Ascending aorta (tissue), 2 donors: ENCODE measurements at regions of chr5 and their contacts with region 1.

Region 1: GRCh38 chr5:131263648-131264450 is at the start of gene CDC42SE2:
- DNase-seq: peak; percentile 49 to 91
- H3K4me3 ChIP-seq: peak within 1 kb of the TSS; percentile 92 to 97
- H3K27ac ChIP-seq: peak within 1 kb of the TSS; percentile 76 to 85
- H3K4me1 ChIP-seq: peaks cover 0 to 2% of the 10 kb centered on the region in 2 donors
- H3K27me3 ChIP-seq: no peaks in the 10 kb centered on the region
- CTCF ChIP-seq: no peak
- total RNA-seq, gene CDC42SE2: 12.8 TPM

Region 2: DNA sequence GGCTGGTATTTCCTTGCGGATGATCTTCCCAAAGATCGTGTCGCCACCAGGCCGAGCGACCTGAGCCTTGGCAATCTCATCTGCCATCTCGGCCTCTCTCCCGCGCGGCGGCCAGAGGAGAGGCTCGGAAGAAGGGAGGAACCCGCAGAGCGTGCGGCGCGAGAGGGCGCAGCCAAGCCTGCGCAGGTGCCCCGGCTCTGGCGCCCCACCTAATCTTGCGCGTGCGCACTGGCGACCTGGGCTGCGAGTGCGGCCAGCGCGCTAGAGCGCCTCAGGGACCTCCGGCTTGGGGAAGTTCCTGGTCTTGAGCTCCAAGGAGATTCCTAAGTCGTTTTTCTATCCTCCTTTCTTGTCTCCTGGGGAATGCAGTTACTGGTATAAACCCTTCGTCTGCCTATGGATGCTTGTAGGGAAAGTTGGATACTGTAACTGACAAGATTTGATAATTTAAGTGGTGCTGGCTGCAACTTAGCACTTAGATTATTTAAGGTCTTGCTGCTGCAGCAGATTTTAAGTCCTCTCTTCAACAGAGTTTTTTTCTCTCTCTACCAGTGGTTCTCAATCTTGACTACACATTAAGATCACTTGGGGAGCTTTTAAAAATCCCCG is 98.6 kb before region 1 on chr5 and contains the start of gene HINT1:
- intact Hi-C with region 1: loop called (anchors 1 kb)
- DNase-seq: peak; percentile 53 to 94
- H3K4me3 ChIP-seq: peak within 1 kb of the TSS; percentile 82 to 83
- H3K27ac ChIP-seq: peak within 1 kb of the TSS; percentile 92 to 94
- H3K4me1 ChIP-seq: peaks cover 3 to 13% of the 10 kb centered on the region in 2 donors
- H3K27me3 ChIP-seq: no peaks in the 10 kb centered on the region
- CTCF ChIP-seq: no peak
- total RNA-seq, gene HINT1: 78.9 TPM

Region 3: GRCh38 chr5:131170540-131171275 is 93.1 kb before region 1 on chr5 and contains the start of gene LYRM7:
- intact Hi-C with region 1: loop called (anchors 1 kb)
- DNase-seq: peak; percentile 95 to 99
- H3K4me3 ChIP-seq: peak within 1 kb of the TSS; percentile 81
- H3K27ac ChIP-seq: peak within 1 kb of the TSS; percentile 57 to 70
- H3K4me1 ChIP-seq: peaks cover 10 to 11% of the 10 kb centered on the region in 2 donors
- H3K27me3 ChIP-seq: no peaks in the 10 kb centered on the region
- CTCF ChIP-seq: no peak
- total RNA-seq, gene LYRM7: 0.32 TPM

Region 4: DNA sequence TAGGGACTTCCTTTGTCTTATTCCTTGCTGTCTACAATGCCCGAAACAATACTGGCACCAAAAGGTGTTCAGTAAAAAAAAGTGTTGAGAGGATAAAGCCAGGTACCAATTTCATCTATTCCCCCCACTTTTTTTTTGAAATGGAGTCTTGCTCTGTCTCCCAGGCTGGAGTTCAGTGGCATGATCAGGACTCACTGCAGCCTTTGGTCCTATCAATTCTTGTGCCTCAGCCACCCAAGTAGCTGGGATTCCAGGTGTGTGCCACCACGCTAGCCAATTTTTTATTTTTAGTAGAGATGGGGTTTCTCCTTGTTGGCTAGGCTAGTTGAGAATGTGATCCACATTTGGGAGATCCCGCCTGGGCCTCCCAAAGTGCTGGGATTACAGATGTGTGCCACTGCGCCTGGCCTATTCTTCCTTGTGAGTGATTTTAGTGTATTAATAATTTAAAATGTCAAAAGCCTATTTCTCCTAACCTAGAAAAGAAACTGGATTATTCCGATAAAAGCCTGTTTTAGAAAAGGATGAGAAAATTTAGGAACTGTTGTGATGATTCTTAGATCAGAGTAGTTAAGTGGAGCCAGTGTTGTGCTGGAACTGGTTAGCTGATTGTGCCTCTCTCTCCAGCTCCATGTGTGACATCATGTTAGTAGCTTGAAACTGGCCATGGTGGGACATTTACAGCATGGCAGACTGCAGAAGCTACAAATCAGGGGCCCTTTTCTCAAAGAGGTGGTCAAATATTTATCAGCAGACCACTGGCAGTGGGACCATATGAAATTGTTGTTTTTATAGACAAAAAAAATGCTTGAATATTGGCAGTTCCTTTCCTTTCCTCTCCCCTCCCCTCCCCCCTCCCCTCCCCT is 14.3 kb after region 1 on chr5:
- intact Hi-C with region 1: no loop called
- DNase-seq: no peak
- H3K4me3 ChIP-seq: no peak overlapping the region
- H3K27ac ChIP-seq: no peak overlapping the region
- H3K4me1 ChIP-seq: peaks cover 0 to 4% of the 10 kb centered on the region in 2 donors
- H3K27me3 ChIP-seq: no peaks in the 10 kb centered on the region
- CTCF ChIP-seq: no peak

Region 5: GRCh38 chr5:131296213-131296672 is 32.4 kb after region 1 on chr5:
- intact Hi-C with region 1: no loop called
- DNase-seq: no peak
- H3K4me3 ChIP-seq: no peak overlapping the region
- H3K27ac ChIP-seq: no peak overlapping the region
- H3K4me1 ChIP-seq: no peaks in the 10 kb centered on the region
- H3K27me3 ChIP-seq: no peaks in the 10 kb centered on the region
- CTCF ChIP-seq: no peak

Region 6: DNA sequence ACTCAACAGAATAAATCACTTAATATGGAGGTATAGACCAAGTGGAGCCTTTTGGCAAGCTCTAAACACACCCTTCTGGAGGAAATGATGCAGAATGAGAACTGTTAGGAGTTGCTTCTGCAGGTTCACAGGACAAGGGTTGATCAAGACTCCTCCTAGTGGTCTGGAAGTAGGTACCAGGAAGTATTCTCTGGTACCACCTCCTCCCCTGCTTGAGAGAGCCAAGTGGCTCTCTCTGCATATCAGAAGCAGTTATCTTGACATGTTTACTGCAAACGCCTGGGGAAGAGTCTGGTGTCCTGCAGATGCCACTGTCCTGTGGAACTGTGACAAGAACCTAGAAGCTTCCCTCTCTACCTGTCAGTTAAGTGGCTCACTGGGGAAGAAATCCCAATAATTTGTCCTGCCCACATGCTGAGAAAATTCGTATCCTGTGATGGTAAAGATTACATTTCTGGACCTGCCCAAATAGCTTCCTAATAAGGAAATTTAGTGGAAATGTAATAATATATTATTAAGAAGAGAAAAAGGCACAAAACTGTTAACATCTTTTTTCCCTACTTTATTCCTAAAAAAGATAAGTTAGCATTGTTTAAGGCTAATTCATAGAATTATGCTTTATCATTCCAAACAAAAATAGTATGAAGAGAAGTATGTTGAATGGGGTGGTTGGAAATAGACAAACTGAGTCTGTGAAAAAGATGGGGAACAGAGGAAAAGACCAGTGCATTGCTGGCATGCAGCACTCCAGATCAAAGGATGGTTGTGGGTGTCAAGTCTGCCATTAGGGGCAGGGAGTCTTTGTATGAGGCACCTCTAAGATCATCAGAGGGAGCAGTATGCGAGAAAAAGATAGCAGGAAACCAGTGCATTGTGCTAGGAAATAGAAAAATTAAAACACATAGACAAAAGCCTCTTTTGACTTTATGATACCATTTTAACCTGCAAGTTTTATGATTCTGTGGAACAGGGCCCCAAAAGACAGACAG is 118.9 kb after region 1 on chr5:
- intact Hi-C with region 1: loop called (anchors 10 kb)
- DNase-seq: no peak
- H3K4me3 ChIP-seq: no peak overlapping the region
- H3K27ac ChIP-seq: no peak overlapping the region
- H3K4me1 ChIP-seq: peaks cover 0 to 15% of the 10 kb centered on the region in 2 donors
- H3K27me3 ChIP-seq: no peaks in the 10 kb centered on the region
- CTCF ChIP-seq: peak in 2 of 3 experiments; percentile 8 to 17

Region 7: DNA sequence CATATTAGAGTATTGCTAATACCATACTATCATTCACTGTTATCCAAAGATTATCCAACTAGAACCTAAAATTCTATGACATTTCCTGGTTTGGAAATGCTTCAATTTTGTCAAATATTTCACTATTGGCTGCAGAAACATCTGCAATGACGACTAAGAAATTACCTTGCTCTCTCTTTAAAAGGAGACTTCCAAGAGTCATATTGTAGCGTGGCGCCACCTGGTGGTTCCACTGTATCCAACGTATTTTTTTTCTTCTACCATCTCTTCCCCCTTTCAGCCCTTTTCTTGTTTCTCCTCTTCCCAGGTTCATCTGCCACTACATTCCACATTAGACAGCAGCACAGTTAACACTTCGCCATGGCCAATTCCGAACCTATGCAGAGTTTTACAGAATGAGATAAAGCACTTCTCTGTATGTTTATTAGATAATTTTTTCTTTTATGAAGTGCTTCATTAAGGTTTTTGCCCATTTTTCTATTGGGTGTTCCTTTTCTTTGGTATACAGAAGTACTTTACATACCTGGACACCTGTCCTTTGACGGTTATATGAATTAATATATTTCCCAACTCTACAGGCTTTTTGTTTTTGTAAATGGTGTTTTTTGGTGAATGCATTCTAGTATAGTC is 153.5 kb after region 1 on chr5:
- intact Hi-C with region 1: loop called (anchors 5 kb)
- DNase-seq: peak in 1 of 2 donors; percentile 79
- H3K4me3 ChIP-seq: no peak overlapping the region
- H3K27ac ChIP-seq: no peak overlapping the region
- H3K4me1 ChIP-seq: peaks cover 0 to 4% of the 10 kb centered on the region in 2 donors
- H3K27me3 ChIP-seq: no peaks in the 10 kb centered on the region
- CTCF ChIP-seq: peak; percentile 56 to 85 (median 81)

Region 8: GRCh38 chr5:131796793-131797693 is 533.2 kb after region 1 on chr5 and contains the start of gene FNIP1:
- intact Hi-C with region 1: loop called (anchors 10 kb)
- DNase-seq: peak; percentile 99 to 100
- H3K4me3 ChIP-seq: peak within 1 kb of the TSS; percentile 73 to 98
- H3K27ac ChIP-seq: peak within 1 kb of the TSS; percentile 95 to 99
- H3K4me1 ChIP-seq: peaks cover 0 to 18% of the 10 kb centered on the region in 2 donors
- H3K27me3 ChIP-seq: no peaks in the 10 kb centered on the region
- CTCF ChIP-seq: no peak
- total RNA-seq, gene FNIP1: 20.5 TPM